ENCODE measurements at regions of chr1 and their contacts with region 1.

Region 1: DNA sequence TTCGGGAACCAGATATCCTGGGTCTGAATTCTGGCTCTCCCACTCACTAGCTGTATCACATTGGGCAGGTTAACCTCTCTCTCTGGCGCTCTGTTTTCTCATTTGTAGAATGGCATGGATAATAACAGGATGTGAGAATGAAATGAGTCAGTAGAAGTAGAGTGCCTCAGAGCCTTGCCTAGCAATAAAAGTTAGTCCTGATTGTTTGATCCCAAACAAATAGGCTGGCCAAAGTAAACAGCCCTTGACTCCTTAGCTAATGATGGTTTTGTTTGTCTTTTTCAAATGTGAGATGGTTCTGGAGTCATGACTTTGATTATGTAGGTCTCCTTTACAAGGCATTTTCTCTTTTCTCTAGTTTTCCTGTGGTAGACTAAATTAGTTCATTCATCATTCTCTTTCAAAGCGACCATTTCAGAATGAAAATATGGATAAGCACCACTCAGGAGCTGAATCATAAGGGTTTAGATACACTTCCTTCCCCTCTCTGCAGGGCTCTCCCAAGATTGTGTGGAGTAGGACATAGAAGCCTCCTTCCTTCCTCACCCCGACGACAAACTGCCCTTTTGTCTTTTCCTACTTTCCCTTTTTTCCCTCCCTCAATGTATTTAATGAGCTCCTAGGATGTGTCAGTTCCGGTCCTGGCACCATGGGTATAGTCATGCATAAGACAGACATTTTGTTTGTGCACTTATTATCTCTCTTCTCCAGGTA is 23.1 kb downstream of the KIAA0040 start:
- DNase-seq: peak; percentile 94
- H3K4me3 ChIP-seq: peak overlapping the region in 1 of 3 experiments; percentile 40
- H3K27ac ChIP-seq: peak overlapping the region; percentile 99
- H3K4me1 ChIP-seq: peaks cover 32% of the 10 kb centered on the region
- H3K27me3 ChIP-seq: no peaks in the 10 kb centered on the region
- CTCF ChIP-seq: no peak
- POLR2A ChIP-seq: peak; percentile 56

Region 2: GRCh38 chr1:175179845-175180590 is 10.6 kb after region 1 on chr1:
- CTCF ChIA-PET with region 1: interaction called, 10 read pairs
- POLR2A ChIA-PET with region 1: no interaction called
- dilution Hi-C with region 1: no loop called
- intact Hi-C with region 1: no loop called
- DNase-seq: no peak
- H3K4me3 ChIP-seq: no peak overlapping the region
- H3K27ac ChIP-seq: no peak overlapping the region
- H3K4me1 ChIP-seq: no peaks in the 10 kb centered on the region
- H3K27me3 ChIP-seq: no peaks in the 10 kb centered on the region
- CTCF ChIP-seq: no peak
- POLR2A ChIP-seq: no peak

Region 3: DNA sequence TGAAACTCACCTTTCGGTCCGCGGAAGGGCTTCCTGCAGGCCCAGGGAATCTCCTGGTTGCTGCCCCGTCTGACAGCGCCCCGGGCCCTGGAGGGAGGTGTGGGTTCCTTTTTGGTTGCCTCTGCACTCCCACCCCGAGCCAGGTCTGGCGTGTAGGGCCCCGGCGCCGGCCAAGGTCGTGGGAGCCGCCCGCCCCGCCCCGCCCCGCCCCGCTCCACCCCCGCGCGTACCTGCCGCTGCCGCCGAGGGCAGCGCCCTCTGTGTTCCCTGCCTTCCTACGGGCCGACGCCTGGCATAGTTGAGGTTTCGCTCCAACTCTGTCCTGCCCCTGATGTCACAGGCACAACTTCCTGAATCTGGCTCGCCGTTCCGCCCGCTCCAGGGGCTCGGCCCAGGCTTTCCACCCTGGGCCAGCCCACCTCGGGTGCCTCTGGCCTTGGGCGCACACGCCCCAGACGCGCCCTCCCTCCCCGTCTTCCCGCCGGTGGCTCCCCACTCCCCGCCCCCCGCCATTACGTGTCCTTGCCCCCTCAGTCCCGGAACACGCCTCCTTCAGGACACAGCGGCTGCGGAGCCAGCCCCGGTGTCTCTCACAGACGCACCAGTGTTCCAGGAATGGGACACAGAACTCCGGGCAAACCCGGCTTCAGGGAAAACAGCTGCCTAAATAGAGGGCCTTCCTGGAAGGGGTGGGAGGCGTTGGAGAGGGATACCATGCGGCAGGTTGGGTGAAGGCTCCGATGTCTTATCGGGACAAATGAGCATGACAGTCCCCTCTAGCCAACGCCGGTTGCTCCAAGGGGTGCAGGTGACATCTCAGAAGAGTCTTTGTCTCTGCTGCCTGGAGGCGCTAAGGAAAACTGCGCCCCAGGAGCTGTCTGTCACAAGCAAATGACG is 23.4 kb after region 1 on chr1 and contains the start of gene KIAA0040:
- CTCF ChIA-PET with region 1: interaction called, 14 read pairs
- POLR2A ChIA-PET with region 1: interaction called, 3 read pairs
- dilution Hi-C with region 1: no loop called
- intact Hi-C with region 1: loop called (anchors 1 kb)
- DNase-seq: peak; percentile 62
- H3K4me3 ChIP-seq: peak within 1 kb of the TSS; percentile 62 to 93 (median 87)
- H3K27ac ChIP-seq: peak within 1 kb of the TSS; percentile 75
- H3K4me1 ChIP-seq: peaks cover 20% of the 10 kb centered on the region
- H3K27me3 ChIP-seq: no peaks in the 10 kb centered on the region
- CTCF ChIP-seq: peak in 1 of 2 donors; percentile 24
- POLR2A ChIP-seq: no peak
- total RNA-seq, gene KIAA0040: 10.9 and 21.5 TPM in 2 replicates

Region 4: GRCh38 chr1:175200678-175201521 is 31.4 kb after region 1 on chr1:
- CTCF ChIA-PET with region 1: interaction called, 4 read pairs
- POLR2A ChIA-PET with region 1: interaction called, 3 read pairs
- dilution Hi-C with region 1: no loop called
- intact Hi-C with region 1: loop called (anchors 1 kb)
- DNase-seq: peak; percentile 91
- H3K4me3 ChIP-seq: no peak overlapping the region
- H3K27ac ChIP-seq: peak overlapping the region; percentile 85
- H3K4me1 ChIP-seq: peaks cover 42% of the 10 kb centered on the region
- H3K27me3 ChIP-seq: no peaks in the 10 kb centered on the region
- CTCF ChIP-seq: no peak
- POLR2A ChIP-seq: no peak

Region 5: GRCh38 chr1:175221666-175222175 is 52.3 kb after region 1 on chr1:
- CTCF ChIA-PET with region 1: interaction called, 6 read pairs
- POLR2A ChIA-PET with region 1: no interaction called
- dilution Hi-C with region 1: no loop called
- intact Hi-C with region 1: loop called (anchors 1 kb)
- DNase-seq: peak; percentile 43
- H3K4me3 ChIP-seq: no peak overlapping the region
- H3K27ac ChIP-seq: no peak overlapping the region
- H3K4me1 ChIP-seq: peaks cover 7% of the 10 kb centered on the region
- H3K27me3 ChIP-seq: no peaks in the 10 kb centered on the region
- CTCF ChIP-seq: peak; percentile 7 to 12
- POLR2A ChIP-seq: no peak

Region 6: DNA sequence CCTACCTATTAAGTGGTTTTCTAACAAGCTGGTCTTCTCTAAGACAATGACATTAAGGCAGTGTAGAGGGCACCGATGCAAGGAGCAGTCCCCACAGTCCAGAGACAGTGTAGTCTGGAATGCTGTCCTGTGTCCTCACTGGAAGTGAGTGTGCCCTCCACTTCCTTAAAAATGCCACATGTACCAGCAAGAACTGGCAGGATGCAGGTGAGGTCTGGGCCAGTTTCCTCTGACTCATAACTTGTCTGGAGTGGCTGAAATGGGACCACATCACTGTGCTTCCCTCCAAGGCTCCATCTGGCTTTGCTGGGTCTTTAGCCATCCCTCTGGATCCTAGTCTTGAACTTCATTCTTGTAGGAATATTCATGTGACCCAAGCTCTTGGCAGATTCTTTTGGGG is 193.6 kb after region 1 on chr1:
- CTCF ChIA-PET with region 1: no interaction called
- POLR2A ChIA-PET with region 1: no interaction called
- dilution Hi-C with region 1: no loop called
- intact Hi-C with region 1: loop called (anchors 1 kb)
- DNase-seq: peak; percentile 43
- H3K4me3 ChIP-seq: no peak overlapping the region
- H3K27ac ChIP-seq: peak overlapping the region; percentile 9
- H3K4me1 ChIP-seq: peaks cover 14% of the 10 kb centered on the region
- H3K27me3 ChIP-seq: peaks cover 3 to 16% of the 10 kb centered on the region in 2 experiments
- CTCF ChIP-seq: no peak
- POLR2A ChIP-seq: no peak